ENCODE measurements at regions of chr19 and their contacts with region 1.

Region 1: DNA sequence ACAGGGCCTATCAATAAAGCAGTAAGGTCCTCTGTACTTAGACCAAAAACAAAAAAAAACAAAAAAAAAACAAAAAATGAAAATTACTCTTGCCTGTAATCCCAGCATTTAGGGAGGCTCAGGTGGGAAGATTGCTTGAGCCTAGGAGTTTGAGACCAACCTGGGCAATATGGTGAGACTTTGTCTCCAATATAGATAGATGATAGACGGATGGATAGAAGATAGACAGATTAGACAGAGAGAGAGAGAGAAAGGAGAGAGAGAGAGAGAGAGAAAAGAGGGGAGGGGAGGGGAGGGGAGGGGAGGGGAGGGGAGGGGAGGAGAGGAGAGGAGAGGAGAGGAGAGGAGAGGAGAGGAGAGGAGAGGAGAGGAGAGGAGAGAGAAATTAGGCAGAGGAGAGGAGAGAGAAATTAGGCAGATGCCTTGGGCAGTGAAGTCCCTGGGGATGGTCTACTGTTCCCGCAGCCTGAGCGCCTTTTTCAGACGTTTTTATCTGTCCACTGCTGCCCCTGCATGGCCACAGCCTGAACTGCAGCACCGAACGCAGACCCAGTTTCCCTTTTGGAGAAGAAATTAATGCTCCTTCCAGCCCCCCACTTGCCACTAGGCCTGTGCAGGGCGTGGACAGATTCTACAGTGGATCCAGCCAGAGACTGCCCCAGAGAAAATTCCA is 9.8 kb upstream of the ZNF627 start:
- DNase-seq: peak; percentile 74 to 81
- ATAC-seq: peak; percentile 78 to 91 (median 86)
- H3K4me3 ChIP-seq: no peak overlapping the region
- H3K27ac ChIP-seq: no peak overlapping the region
- H3K4me1 ChIP-seq: peaks cover 0 to 18% (median 0%) of the 10 kb centered on the region in 9 donors
- H3K27me3 ChIP-seq: no peaks in the 10 kb centered on the region
- CTCF ChIP-seq: peak; percentile 75 to 91 (median 83)

Region 2: GRCh38 chr19:11496391-11497163 is 90.9 kb before region 1 on chr19:
- intact Hi-C with region 1: loop called in 4 of 10 experiments (anchors 2 to 5 kb)
- DNase-seq: peak; percentile 36 to 61
- ATAC-seq: peak in 6 of 8 donors; percentile 42 to 71 (median 59)
- H3K4me3 ChIP-seq: no peak overlapping the region
- H3K27ac ChIP-seq: no peak overlapping the region
- H3K4me1 ChIP-seq: no peaks in the 10 kb centered on the region
- H3K27me3 ChIP-seq: no peaks in the 10 kb centered on the region
- CTCF ChIP-seq: peak; percentile 43 to 74 (median 63)

Region 3: GRCh38 chr19:11535792-11536595 is 51.4 kb before region 1 on chr19:
- intact Hi-C with region 1: loop called in 1 of 10 experiments (anchors 10 kb)
- DNase-seq: peak; percentile 90 to 94
- ATAC-seq: peak; percentile 79 to 94 (median 89)
- H3K4me3 ChIP-seq: peak overlapping the region in 9 of 10 donors; percentile 22 to 56 (median 46)
- H3K27ac ChIP-seq: peak overlapping the region; percentile 66 to 94 (median 86)
- H3K4me1 ChIP-seq: peaks cover 0 to 33% (median 22%) of the 10 kb centered on the region in 9 donors
- H3K27me3 ChIP-seq: peaks cover 0 to 23% (median 0%) of the 10 kb centered on the region in 7 donors
- CTCF ChIP-seq: peak; percentile 86 to 99 (median 96)

Region 4: GRCh38 chr19:11558881-11559828 is 28.3 kb before region 1 on chr19 and contains the start of gene ELOF1:
- intact Hi-C with region 1: loop called in 2 of 10 experiments (anchors 2 kb)
- DNase-seq: peak; percentile 97 to 98
- ATAC-seq: peak; percentile 97 to 99 (median 99)
- H3K4me3 ChIP-seq: peak within 1 kb of the TSS; percentile 61 to 96 (median 82)
- H3K27ac ChIP-seq: peak within 1 kb of the TSS; percentile 15 to 87 (median 74)
- H3K4me1 ChIP-seq: peaks cover 9 to 44% (median 36%) of the 10 kb centered on the region in 9 donors
- H3K27me3 ChIP-seq: no peaks in the 10 kb centered on the region
- CTCF ChIP-seq: peak in 3 of 9 donors; percentile 24 to 45 (median 37)
- total RNA-seq, gene ELOF1: 24.9 to 37.5 (median 30.9) TPM